ENCODE measurements at regions of chr3 and their contacts with region 1.

Region 1: DNA sequence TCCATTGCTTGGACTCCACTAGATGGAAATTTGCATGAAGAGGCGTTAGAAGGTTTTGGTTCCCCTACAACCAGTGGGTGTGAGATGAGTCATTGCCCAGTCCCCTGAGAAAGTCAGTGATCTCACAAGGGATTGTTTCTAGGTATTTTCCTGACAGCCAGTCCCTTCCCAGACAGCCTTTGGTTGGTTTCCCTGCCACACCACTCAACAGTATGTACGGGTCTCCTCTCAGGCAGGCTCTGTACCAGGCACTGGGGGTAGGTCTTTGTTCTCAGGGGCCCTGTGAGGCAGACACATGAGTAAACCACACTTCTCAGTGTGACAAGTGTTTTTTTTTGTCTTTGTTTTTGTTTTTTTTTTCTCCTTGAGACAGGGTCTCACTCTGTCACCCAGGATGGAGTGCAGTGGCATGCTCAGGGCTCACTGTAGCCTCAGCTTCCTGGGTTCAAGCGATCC is 4.0 kb downstream of the LAMP3 start:
- DNase-seq: peak; percentile 80
- H3K4me3 Mint-ChIP-seq: peak overlapping the region; percentile 19
- H3K27ac Mint-ChIP-seq: peak overlapping the region; percentile 74
- H3K4me1 Mint-ChIP-seq: peaks cover 41% of the 10 kb centered on the region
- H3K27me3 Mint-ChIP-seq: no peaks in the 10 kb centered on the region

Region 2: GRCh38 chr3:182575941-182576340 is 582.6 kb before region 1 on chr3:
- CTCF ChIA-PET with region 1: no interaction called
- intact Hi-C with region 1: no loop called
- DNase-seq: no peak
- H3K4me3 Mint-ChIP-seq: no peak overlapping the region
- H3K27ac Mint-ChIP-seq: no peak overlapping the region
- H3K4me1 Mint-ChIP-seq: no peaks in the 10 kb centered on the region
- H3K27me3 Mint-ChIP-seq: no peaks in the 10 kb centered on the region

Region 3: GRCh38 chr3:182980204-182981037 is 178.2 kb before region 1 on chr3 and contains the start of gene DCUN1D1:
- CTCF ChIA-PET with region 1: no interaction called
- intact Hi-C with region 1: loop called (anchors 5 kb)
- DNase-seq: peak; percentile 88
- H3K4me3 Mint-ChIP-seq: peak within 1 kb of the TSS; percentile 88
- H3K27ac Mint-ChIP-seq: peak within 1 kb of the TSS; percentile 83
- H3K4me1 Mint-ChIP-seq: peaks cover 20% of the 10 kb centered on the region
- H3K27me3 Mint-ChIP-seq: no peaks in the 10 kb centered on the region
- total RNA-seq, gene DCUN1D1: 38.4 to 40.5 TPM

Region 4: DNA sequence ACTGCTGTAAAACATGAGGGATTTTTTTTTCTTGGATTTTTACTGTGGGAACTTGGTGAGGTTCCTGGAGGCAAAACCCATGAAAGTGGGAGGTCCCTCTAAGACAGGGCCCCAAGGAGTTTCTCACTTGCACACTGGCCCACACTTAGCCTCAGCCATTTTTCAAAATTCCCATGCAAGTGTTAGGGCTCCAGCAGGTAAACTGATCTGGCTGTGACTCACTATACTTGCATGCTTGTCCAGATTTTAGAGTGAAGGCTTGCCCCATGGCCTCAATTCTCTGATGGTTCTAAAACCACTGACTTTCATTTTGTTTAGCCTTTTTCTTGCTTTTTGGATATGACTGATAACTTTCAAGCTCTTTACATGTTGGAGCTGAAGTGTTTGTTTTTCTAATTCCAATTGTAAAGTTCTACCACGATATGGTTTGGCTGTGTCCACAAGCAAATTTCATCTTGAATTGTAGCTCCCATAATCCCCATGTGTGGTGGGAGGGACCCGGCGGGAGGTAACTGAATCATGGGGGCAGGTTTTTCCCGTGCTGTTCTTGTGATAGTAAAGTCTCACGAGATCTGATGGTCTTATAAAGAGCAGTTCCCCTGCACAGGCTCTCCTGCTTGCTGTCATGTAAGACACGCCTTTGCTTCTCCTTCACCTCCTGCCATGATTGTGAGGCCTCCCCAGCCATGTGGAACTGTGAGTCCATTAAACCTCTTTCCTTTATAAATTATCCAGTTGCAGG is 97.0 kb before region 1 on chr3:
- CTCF ChIA-PET with region 1: no interaction called
- intact Hi-C with region 1: no loop called
- DNase-seq: no peak
- H3K4me3 Mint-ChIP-seq: no peak overlapping the region
- H3K27ac Mint-ChIP-seq: no peak overlapping the region
- H3K4me1 Mint-ChIP-seq: no peaks in the 10 kb centered on the region
- H3K27me3 Mint-ChIP-seq: no peaks in the 10 kb centered on the region

Region 5: GRCh38 chr3:183099026-183099837 is 59.3 kb before region 1 on chr3 and contains the start of gene MCCC1:
- CTCF ChIA-PET with region 1: no interaction called
- intact Hi-C with region 1: loop called (anchors 1 kb)
- DNase-seq: peak; percentile 99
- H3K4me3 Mint-ChIP-seq: peak within 1 kb of the TSS; percentile 97
- H3K27ac Mint-ChIP-seq: peak within 1 kb of the TSS; percentile 91
- H3K4me1 Mint-ChIP-seq: peaks cover 33% of the 10 kb centered on the region
- H3K27me3 Mint-ChIP-seq: no peaks in the 10 kb centered on the region
- total RNA-seq, gene MCCC1: 21.0 to 24.9 TPM

Region 6: DNA sequence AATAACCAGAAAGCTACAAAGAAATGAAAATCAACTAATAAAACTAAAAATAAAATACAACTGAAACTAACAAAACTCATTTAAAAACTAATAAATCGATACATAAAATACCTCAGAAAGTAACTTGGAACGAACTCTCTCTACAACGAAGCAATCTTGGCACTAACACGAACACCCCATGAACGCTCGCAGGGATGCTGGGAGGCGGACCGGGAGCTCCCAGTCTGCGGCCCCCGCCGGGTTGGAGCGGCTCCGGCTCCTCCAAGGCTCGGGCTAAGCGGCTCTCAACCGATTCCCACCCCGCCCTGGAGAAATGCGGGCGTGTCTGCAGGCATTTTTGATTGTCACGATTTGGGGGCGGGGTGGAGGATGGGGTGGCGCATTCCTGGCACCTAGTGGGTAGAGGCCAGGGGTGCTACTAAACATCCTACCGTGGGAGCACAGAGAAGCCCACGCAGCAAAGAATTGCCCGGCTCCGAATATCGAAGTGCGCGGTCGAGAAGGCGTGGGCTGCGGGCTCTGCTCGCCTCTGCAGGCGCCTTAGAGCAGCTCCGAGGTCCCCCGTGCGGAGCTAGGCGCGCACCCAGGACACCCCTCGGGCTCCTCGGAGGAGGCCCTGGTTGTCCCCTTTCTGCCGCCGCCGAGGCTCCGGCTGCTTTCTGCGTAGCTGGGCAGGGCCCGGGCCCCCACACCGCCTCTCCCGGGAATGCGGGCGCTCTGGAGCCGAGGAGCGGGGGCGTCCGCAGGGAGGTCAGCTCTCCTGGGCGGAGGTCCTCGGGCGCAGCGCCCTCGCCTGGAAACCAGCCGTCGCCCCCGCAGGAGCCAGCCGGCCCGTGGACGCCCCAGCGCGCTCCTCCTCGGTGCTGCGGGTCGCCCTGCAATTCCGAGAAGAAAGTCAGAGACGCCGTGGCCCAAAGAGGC is 20.3 kb after region 1 on chr3:
- CTCF ChIA-PET with region 1: interaction called, 16 read pairs
- intact Hi-C with region 1: loop called (anchors 1 kb)
- DNase-seq: peak; percentile 84
- H3K4me3 Mint-ChIP-seq: peak overlapping the region; percentile 76
- H3K27ac Mint-ChIP-seq: no peak overlapping the region
- H3K4me1 Mint-ChIP-seq: peaks cover 11% of the 10 kb centered on the region
- H3K27me3 Mint-ChIP-seq: peaks cover 30% of the 10 kb centered on the region

Region 7: DNA sequence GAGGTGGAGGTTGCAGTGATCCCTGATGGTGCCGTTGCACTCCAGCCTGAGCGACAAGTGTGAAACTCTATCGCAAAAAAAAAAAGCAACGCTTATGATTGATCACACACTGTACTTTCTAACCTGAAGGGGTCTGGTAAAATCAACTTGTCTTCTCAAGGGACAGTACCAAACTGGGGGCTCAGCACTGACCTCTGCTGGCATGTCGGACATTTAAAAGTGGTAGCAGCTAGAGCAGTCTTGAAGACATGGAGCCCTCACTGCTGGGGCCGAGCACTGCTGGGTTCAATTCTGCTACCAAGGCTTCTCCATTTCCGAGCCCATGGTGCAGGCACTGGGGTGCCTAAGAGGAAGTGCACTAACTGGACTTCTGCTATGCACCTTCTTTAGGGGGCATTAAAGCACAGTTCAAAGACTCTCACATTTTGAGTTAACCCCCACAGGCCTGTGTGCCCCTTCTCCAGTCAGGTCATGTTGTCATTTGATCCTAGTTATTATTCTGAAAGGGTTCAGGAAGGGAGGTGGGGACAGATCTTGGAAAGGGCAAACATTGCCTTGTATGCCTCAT is 30.4 kb after region 1 on chr3:
- CTCF ChIA-PET with region 1: interaction called, 16 read pairs
- intact Hi-C with region 1: no loop called
- DNase-seq: peak; percentile 47
- H3K4me3 Mint-ChIP-seq: no peak overlapping the region
- H3K27ac Mint-ChIP-seq: no peak overlapping the region
- H3K4me1 Mint-ChIP-seq: peaks cover 27% of the 10 kb centered on the region
- H3K27me3 Mint-ChIP-seq: no peaks in the 10 kb centered on the region

Region 8: GRCh38 chr3:183812761-183813445 is 654.3 kb after region 1 on chr3:
- CTCF ChIA-PET with region 1: no interaction called
- intact Hi-C with region 1: no loop called
- DNase-seq: no peak
- H3K4me3 Mint-ChIP-seq: no peak overlapping the region
- H3K27ac Mint-ChIP-seq: peak overlapping the region; percentile 60
- H3K4me1 Mint-ChIP-seq: peaks cover 4% of the 10 kb centered on the region
- H3K27me3 Mint-ChIP-seq: no peaks in the 10 kb centered on the region

Region 9: GRCh38 chr3:184314363-184314699 is 1155.8 kb after region 1 on chr3 and contains the start of gene EIF4G1:
- CTCF ChIA-PET with region 1: no interaction called
- intact Hi-C with region 1: no loop called
- DNase-seq: peak; percentile 93
- H3K4me3 Mint-ChIP-seq: peak within 1 kb of the TSS; percentile 86
- H3K27ac Mint-ChIP-seq: peak within 1 kb of the TSS; percentile 90
- H3K4me1 Mint-ChIP-seq: peaks cover 29% of the 10 kb centered on the region
- H3K27me3 Mint-ChIP-seq: no peaks in the 10 kb centered on the region
- total RNA-seq, gene EIF4G1: 345 to 375 TPM

Measured in activated naive CD4-positive, alpha-beta T cell treated with anti-CD3 and anti-CD28 coated beads for 36 hours (primary cell).